Esophagus muscularis mucosa (tissue), 4 donors: ENCODE measurements at regions of chr7 and their contacts with region 1.

Region 1: GRCh38 chr7:151459726-151460473 is 20.0 kb upstream of the CRYGN start:
- DNase-seq: peak; percentile 96
- H3K4me3 ChIP-seq: peak overlapping the region; percentile 27 to 43 (median 30)
- H3K27ac ChIP-seq: peak overlapping the region; percentile 91 to 96 (median 94)
- H3K4me1 ChIP-seq: peaks cover 34 to 38% (median 34%) of the 10 kb centered on the region in 4 donors
- H3K27me3 ChIP-seq: no peaks in the 10 kb centered on the region
- CTCF ChIP-seq: peak; percentile 42 to 55 (median 46)
- EP300 ChIP-seq: peak; percentile 97
- POLR2A ChIP-seq: no peak

Region 2: DNA sequence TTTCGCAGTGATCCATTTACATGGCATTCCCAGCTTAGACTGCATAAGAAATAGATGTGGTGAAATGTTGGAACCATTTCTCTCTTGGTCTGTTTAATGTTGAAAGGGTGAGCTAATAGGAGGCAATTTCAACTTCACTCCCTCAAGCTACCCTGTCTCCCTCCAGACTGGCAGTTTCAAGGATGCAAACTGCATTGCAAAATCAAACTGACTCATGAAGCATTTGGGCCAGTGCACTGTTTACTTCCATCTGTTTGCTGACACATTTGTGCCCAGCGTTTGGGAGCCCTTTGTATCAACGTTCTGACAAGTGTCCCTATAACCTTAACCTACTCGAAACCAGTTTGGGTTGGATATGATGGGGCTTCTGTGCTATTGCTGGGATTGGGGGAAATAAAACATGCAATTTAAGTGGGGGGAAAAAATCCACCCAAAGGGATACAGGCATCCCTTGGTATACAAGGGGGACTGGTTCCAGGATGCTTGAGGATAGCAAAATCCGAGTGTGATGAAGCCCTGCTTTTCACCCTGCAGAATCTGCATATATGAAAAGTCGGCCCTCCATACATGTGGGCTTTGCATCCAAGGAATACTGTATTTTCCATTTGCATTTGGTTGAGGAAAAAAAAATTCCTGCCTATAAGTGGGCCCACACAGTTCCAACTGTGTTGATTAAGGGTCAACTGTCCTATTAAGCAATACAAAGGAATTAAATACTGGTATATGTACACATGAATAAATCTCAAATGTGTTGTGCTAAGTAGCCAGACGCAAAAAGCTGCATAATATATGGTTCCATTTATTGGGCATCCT is 44.2 kb after region 1 on chr7:
- intact Hi-C with region 1: loop called (anchors 5 kb)
- DNase-seq: no peak
- H3K4me3 ChIP-seq: no peak overlapping the region
- H3K27ac ChIP-seq: peak overlapping the region; percentile 44 to 79 (median 68)
- H3K4me1 ChIP-seq: peaks cover 61 to 94% (median 87%) of the 10 kb centered on the region in 4 donors
- H3K27me3 ChIP-seq: no peaks in the 10 kb centered on the region
- CTCF ChIP-seq: no peak
- EP300 ChIP-seq: no peak
- POLR2A ChIP-seq: no peak

Region 3: DNA sequence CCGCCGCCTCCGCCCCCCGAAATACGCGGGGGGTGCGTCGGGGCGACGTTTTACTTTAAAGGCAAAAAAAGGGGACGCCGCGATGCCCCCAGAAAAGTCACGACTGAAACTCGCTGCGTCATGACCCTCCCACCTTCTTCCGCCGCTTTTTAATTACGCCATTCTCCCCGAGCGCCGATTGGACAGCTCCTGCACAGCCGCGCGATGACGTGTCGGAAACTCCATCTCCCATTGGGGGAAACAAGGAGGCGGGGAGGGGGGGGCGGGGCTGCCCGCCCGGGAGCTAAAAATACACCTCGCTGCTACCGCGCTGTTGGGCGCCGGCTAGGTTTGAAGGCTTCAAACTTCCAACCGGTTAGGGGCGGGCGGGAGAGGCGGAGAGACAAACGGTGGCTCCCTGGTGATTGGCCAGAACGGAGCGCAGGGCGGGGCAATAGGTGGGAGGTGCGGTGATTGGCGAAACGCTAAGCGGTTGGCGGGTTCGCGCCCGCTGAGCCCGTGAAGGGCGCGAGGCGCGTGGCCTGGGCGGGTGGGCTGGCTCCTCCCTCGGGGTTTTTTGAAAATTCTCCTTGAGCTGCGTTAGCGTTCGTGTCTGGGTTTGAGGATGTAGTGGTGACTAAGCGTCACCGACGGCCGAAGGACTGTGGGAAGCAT is 60.0 kb after region 1 on chr7 and contains the start of gene RHEB:
- intact Hi-C with region 1: loop called (anchors 2 kb)
- DNase-seq: peak; percentile 100
- H3K4me3 ChIP-seq: peak within 1 kb of the TSS; percentile 71 to 99 (median 86)
- H3K27ac ChIP-seq: peak within 1 kb of the TSS; percentile 97 to 100 (median 100)
- H3K4me1 ChIP-seq: peaks cover 32 to 44% (median 42%) of the 10 kb centered on the region in 4 donors
- H3K27me3 ChIP-seq: no peaks in the 10 kb centered on the region
- CTCF ChIP-seq: no peak
- EP300 ChIP-seq: peak; percentile 33
- POLR2A ChIP-seq: no peak
- total RNA-seq, gene RHEB: 98.5 to 187 (median 163) TPM

Region 4: DNA sequence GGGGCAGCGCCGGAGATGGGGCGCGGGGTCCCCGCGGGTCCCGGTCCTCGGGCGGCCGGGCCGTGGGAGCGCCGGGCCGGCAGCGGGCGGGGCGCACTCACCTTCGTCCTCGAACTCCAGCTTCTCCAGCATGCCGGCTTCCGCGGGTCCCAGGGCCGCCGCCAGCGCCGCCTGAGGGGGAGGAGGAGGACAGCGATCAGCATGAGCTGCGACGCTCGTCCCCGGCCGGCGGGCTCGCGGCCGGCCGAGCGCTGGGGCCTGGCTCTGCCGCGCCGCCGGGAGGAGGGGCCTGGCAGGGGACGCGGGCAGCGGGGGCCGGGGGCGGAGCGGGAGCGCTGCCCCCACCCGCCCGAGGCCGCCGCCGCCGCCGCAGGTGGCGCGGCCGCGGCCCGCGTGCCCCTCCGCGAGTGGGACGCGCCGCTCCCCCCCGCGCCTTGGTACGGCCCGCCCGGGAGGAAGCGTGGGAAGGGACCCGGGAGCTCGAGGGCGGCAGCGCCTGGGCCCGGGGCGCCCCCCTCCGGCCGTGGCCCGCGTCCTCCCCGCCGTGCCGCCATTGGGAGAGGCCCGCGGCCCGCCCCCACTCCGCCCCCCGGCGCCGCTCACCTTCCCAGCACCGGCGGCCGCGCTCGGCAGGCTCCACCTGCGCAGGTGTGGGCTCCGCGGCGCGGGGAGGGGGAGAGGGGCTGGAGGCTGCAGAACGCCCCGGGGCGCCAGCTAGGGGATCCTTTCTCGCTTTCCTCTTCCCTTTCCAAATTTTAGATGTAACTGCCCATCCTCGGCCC is 172.3 kb after region 1 on chr7:
- intact Hi-C with region 1: loop called (anchors 5 kb)
- DNase-seq: no peak
- H3K4me3 ChIP-seq: peak overlapping the region; percentile 72 to 92 (median 82)
- H3K27ac ChIP-seq: peak overlapping the region; percentile 93 to 97 (median 96)
- H3K4me1 ChIP-seq: peaks cover 24 to 66% (median 52%) of the 10 kb centered on the region in 4 donors
- H3K27me3 ChIP-seq: no peaks in the 10 kb centered on the region
- CTCF ChIP-seq: peak; percentile 43 to 62 (median 53)
- EP300 ChIP-seq: no peak
- POLR2A ChIP-seq: no peak